ENCODE measurements at regions of chr1 and their contacts with region 1.

Region 1: GRCh38 chr1:39564340-39564739 is 12.2 kb downstream of the PABPC4 start:
- DNase-seq: no peak
- H3K4me3 ChIP-seq: no peak overlapping the region
- H3K27ac ChIP-seq: no peak overlapping the region
- H3K4me1 ChIP-seq: no peaks in the 10 kb centered on the region
- H3K27me3 ChIP-seq: no peaks in the 10 kb centered on the region
- CTCF ChIP-seq: no peak

Region 2: GRCh38 chr1:38929476-38929875 is 634.9 kb before region 1 on chr1:
- CTCF ChIA-PET with region 1: no interaction called
- POLR2A ChIA-PET with region 1: interaction called, 11 read pairs
- intact Hi-C with region 1: no loop called
- DNase-seq: no peak
- H3K4me3 ChIP-seq: no peak overlapping the region
- H3K27ac ChIP-seq: no peak overlapping the region
- H3K4me1 ChIP-seq: no peaks in the 10 kb centered on the region
- H3K27me3 ChIP-seq: no peaks in the 10 kb centered on the region
- CTCF ChIP-seq: no peak

Region 3: DNA sequence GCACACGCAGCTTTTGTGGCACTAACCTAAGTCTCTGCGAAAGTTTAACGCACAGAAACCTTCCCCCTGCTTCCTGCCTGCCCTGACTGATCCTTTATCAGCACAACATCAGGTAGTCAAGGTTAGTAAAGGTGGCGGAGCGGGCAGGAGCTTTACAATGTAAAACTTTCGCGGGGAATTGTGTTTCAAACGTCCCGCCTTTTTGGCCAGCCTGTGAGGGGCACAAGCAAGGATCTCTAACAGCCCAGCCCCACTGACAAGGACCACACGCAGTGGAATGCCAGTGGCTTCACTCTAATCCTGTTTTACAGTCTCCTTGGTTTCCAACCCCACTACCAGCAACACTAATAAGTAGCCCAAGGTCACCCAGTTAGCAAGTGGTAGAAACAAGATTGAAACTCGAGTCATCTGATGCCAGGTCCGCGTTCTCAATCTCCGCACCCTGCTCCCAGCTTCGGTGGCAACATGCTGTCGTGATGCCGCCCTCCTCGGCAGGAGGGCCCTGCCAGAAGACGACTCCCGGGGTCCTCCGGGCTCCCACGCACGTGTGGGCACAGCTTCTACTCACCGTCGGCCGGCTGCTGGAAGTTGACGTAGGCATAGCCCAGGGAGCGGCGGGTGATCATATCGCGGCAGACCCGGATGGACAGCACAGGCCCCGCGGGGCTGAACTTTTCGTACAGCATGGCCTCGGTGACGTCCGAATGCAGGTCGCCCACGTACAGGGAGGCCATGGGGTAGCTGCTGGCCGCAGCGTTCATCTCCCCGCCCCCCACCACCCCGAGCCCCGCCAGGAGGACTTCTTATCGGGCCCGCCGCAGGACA is 11.1 kb after region 1 on chr1:
- CTCF ChIA-PET with region 1: no interaction called
- POLR2A ChIA-PET with region 1: interaction called, 12 read pairs
- intact Hi-C with region 1: no loop called
- DNase-seq: peak in 1 of 2 experiments; percentile 33
- H3K4me3 ChIP-seq: peak overlapping the region; percentile 76
- H3K27ac ChIP-seq: 0 out of 2 replicates have a peak overlapping the region, but pooled peaks have one; percentile 39
- H3K4me1 ChIP-seq: peaks cover 26% of the 10 kb centered on the region
- H3K27me3 ChIP-seq: no peaks in the 10 kb centered on the region
- CTCF ChIP-seq: no peak